MCF 10A (cell line): ENCODE measurements at regions of chr16 and their contacts with region 1.

Region 1: GRCh38 chr16:88737298-88738150 is 31.2 kb downstream of the CTU2 start:
- DNase-seq: peak; percentile 76
- H3K4me3 Mint-ChIP-seq: no peak overlapping the region
- H3K27ac Mint-ChIP-seq: no peak overlapping the region
- H3K4me1 Mint-ChIP-seq: no peaks in the 10 kb centered on the region
- H3K27me3 Mint-ChIP-seq: no peaks in the 10 kb centered on the region
- CTCF ChIP-seq: peak; percentile 93

Region 2: DNA sequence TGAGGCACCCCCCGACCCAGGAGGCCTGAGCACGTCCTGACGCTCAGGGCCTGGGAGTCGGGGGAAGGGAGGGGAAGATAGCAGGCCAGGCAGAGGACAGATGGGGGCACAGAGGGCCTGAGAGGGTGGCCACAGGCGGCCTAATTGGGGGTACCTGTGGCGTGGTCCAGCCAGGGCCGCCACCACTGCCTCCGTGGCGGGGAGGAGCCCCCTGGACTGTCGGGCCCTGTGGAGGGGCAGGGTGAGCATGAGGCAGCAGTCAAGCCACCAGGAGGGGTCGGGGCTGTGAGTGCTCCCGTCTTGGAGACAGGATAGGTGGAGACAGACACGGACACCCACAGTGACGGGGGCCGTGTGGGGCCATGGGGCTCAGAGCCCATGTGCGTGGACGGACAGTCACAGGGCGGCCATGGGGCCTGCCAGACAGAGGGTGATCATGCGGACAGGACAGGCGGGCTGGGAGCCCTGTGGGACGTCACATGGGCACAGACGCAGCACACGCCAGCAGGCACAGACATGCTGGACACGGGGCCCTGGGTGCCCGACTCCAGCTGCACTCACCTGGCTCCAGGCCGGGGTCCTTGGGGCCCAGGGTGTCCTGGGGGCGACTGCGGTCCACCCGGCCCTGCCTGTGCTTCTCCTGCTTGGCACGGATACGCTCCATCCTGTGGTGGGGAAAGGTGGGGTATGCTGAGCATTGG is 12.5 kb before region 1 on chr16:
- CTCF ChIA-PET with region 1: interaction called, 32 read pairs
- POLR2A ChIA-PET with region 1: no interaction called
- intact Hi-C with region 1: no loop called
- DNase-seq: no peak
- H3K4me3 Mint-ChIP-seq: no peak overlapping the region
- H3K27ac Mint-ChIP-seq: no peak overlapping the region
- H3K4me1 Mint-ChIP-seq: no peaks in the 10 kb centered on the region
- H3K27me3 Mint-ChIP-seq: no peaks in the 10 kb centered on the region
- CTCF ChIP-seq: no peak

Region 3: GRCh38 chr16:88749358-88749757 is 11.8 kb after region 1 on chr16:
- CTCF ChIA-PET with region 1: interaction called, 14 read pairs
- POLR2A ChIA-PET with region 1: interaction called, 4 read pairs
- intact Hi-C with region 1: no loop called
- DNase-seq: no peak
- H3K4me3 Mint-ChIP-seq: no peak overlapping the region
- H3K27ac Mint-ChIP-seq: no peak overlapping the region
- H3K4me1 Mint-ChIP-seq: no peaks in the 10 kb centered on the region
- H3K27me3 Mint-ChIP-seq: no peaks in the 10 kb centered on the region
- CTCF ChIP-seq: no peak

Region 4: DNA sequence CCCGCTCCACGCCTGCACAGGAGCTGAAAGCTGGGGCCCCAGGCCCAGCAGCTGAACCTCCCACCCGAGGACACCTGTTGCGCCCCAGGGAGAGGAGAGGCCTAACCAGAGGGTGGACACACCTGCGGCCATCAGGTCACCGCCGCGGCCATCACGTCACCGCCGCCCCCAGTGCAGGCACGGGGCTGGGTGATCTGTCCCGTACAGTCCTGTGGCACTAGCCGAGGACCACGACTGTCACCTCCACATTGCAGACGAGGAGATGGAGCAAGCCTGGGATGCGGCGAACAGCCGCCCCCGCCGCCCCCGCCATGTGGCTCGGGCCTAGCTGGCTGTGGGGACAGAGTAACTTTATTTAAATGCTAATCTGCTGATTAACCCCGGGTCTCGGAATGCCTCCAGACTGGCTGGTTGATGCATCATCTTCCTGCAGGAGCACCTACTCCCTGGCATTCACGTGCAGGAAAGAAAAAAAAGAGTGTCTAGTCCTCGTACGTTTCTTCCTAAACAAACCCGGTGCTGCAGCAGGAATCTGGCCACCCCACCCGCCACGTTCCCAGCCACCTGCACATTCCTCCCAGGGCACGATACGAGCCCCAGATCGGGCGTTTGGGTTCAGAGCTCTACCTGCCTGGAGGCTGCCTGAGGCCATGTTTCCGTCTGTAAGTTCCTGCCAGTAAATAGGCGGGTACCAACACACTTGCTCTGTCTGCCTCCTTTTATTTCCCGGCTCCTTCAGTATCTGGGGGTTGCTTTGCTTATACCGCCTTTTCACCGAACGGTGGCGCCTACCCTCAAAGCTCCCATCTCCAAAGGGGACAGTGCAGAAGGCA is 17.6 kb after region 1 on chr16:
- CTCF ChIA-PET with region 1: interaction called, 14 read pairs
- POLR2A ChIA-PET with region 1: interaction called, 4 read pairs
- intact Hi-C with region 1: no loop called
- DNase-seq: peak; percentile 75
- H3K4me3 Mint-ChIP-seq: peak overlapping the region; percentile 36
- H3K27ac Mint-ChIP-seq: peak overlapping the region; percentile 23
- H3K4me1 Mint-ChIP-seq: peaks cover 8% of the 10 kb centered on the region
- H3K27me3 Mint-ChIP-seq: no peaks in the 10 kb centered on the region
- CTCF ChIP-seq: no peak

Region 5: GRCh38 chr16:88770461-88771293 is 33.2 kb after region 1 on chr16:
- CTCF ChIA-PET with region 1: interaction called, 19 read pairs
- POLR2A ChIA-PET with region 1: no interaction called
- intact Hi-C with region 1: no loop called
- DNase-seq: peak; percentile 82
- H3K4me3 Mint-ChIP-seq: peak overlapping the region; percentile 57
- H3K27ac Mint-ChIP-seq: peak overlapping the region; percentile 61
- H3K4me1 Mint-ChIP-seq: peaks cover 32% of the 10 kb centered on the region
- H3K27me3 Mint-ChIP-seq: no peaks in the 10 kb centered on the region
- CTCF ChIP-seq: no peak

Region 6: GRCh38 chr16:88785106-88785924 is 47.8 kb after region 1 on chr16 and contains the start of gene PIEZO1:
- CTCF ChIA-PET with region 1: interaction called, 61 read pairs
- POLR2A ChIA-PET with region 1: interaction called, 4 read pairs
- intact Hi-C with region 1: loop called (anchors 1 kb)
- DNase-seq: peak; percentile 55
- H3K4me3 Mint-ChIP-seq: peak within 1 kb of the TSS; percentile 68
- H3K27ac Mint-ChIP-seq: peak within 1 kb of the TSS; percentile 83
- H3K4me1 Mint-ChIP-seq: peaks cover 25% of the 10 kb centered on the region
- H3K27me3 Mint-ChIP-seq: no peaks in the 10 kb centered on the region
- CTCF ChIP-seq: peak; percentile 92
- total RNA-seq, gene PIEZO1: 193 and 195 TPM in 2 replicates

Region 7: DNA sequence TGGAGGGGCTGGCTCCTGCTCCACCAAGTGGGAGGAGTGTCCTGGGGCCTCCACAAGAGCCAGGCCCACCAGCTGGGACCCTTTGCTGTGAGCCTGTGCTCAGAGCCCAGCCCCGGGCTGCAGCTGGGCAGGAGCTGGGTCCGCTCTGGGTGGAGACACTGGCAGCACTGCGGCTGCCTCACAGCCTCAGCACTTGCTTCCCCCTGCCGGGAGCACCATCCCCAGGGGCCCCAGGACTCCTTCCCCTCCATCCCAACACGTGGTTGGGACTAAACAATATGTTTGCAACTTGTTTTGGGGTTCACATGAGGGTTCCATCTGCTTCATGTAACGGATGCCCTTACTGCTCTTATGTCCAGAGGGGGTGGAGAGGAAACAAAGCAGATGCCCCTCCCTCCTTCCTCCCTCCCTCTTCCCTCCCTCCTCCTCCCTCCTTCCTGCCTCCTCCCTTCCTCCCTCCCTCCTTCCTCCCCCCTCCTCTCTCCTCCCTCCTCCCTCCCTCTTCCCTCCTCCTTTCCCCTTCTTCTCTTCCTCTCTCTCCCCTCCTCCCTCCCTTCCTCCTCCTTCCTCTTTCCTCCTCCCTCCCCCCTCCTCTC is 255.7 kb after region 1 on chr16:
- CTCF ChIA-PET with region 1: no interaction called
- POLR2A ChIA-PET with region 1: no interaction called
- intact Hi-C with region 1: no loop called
- DNase-seq: no peak
- H3K4me3 Mint-ChIP-seq: no peak overlapping the region
- H3K27ac Mint-ChIP-seq: no peak overlapping the region
- H3K4me1 Mint-ChIP-seq: no peaks in the 10 kb centered on the region
- H3K27me3 Mint-ChIP-seq: peaks cover 18% of the 10 kb centered on the region
- CTCF ChIP-seq: no peak

Region 8: GRCh38 chr16:89167425-89167941 is 430.0 kb after region 1 on chr16:
- CTCF ChIA-PET with region 1: interaction called, 13 read pairs
- POLR2A ChIA-PET with region 1: interaction called, 3 read pairs
- intact Hi-C with region 1: no loop called
- DNase-seq: peak; percentile 77
- H3K4me3 Mint-ChIP-seq: no peak overlapping the region
- H3K27ac Mint-ChIP-seq: no peak overlapping the region
- H3K4me1 Mint-ChIP-seq: peaks cover 12% of the 10 kb centered on the region
- H3K27me3 Mint-ChIP-seq: no peaks in the 10 kb centered on the region
- CTCF ChIP-seq: peak; percentile 92